ENCODE measurements at regions of chr12 and their contacts with region 1.

Region 1: GRCh38 chr12:112125250-112125999 is at the start of gene TRAFD1:
- DNase-seq: peak; percentile 97 to 99
- ATAC-seq: peak; percentile 99 to 100
- H3K4me3 ChIP-seq: peak within 1 kb of the TSS; percentile 78
- H3K27ac ChIP-seq: peak within 1 kb of the TSS; percentile 75 to 86
- H3K4me1 ChIP-seq: peaks cover 60% of the 10 kb centered on the region
- CTCF ChIP-seq: no peak
- EP300 ChIP-seq: no peak
- POLR2A ChIP-seq: peak; percentile 97
- RAD21 ChIP-seq: no peak
- polyA plus RNA-seq, gene TRAFD1: 23.3 and 33.1 TPM in 2 replicates

Region 2: GRCh38 chr12:112108201-112109079 is 17.0 kb before region 1 on chr12 and contains the start of gene NAA25:
- CTCF ChIA-PET with region 1: interaction called, 21 read pairs
- POLR2A ChIA-PET with region 1: interaction called, 16 read pairs
- DNase-seq: peak; percentile 84 to 93
- ATAC-seq: peak; percentile 81 to 85
- H3K4me3 ChIP-seq: peak within 1 kb of the TSS; percentile 91
- H3K27ac ChIP-seq: peak within 1 kb of the TSS; percentile 89 to 98
- H3K4me1 ChIP-seq: peaks cover 65% of the 10 kb centered on the region
- CTCF ChIP-seq: no peak
- EP300 ChIP-seq: no peak
- POLR2A ChIP-seq: peak; percentile 70
- RAD21 ChIP-seq: no peak
- polyA plus RNA-seq, gene NAA25: 41.4 and 49.3 TPM in 2 replicates

Region 3: DNA sequence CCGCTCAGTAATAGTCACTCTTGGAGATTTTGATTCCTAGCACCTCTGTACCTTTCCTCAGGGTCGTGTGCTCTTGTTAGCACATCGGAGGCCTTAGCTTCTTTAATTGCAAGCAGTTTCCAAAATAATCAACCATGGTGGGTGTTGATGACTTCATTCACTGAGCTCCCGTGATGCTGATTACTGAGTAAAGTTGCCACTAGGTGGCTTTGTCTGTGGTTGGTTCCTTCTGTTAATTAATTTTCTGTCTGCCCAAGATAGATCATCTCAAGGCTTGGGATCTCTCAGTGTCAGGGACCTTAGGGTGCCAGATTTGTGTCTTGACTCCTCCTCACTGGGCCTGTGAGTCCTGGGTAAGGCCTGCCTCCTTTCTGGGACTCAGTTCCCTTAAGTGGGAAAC is 347.6 kb after region 1 on chr12:
- CTCF ChIA-PET with region 1: no interaction called
- POLR2A ChIA-PET with region 1: no interaction called
- DNase-seq: peak; percentile 17 to 33
- ATAC-seq: peak in 1 of 2 experiments; percentile 61; a peak in 3 of 6 replicates
- H3K4me3 ChIP-seq: no peak overlapping the region
- H3K27ac ChIP-seq: no peak overlapping the region
- H3K4me1 ChIP-seq: no peaks in the 10 kb centered on the region
- CTCF ChIP-seq: peak; percentile 29; the same call in 2 of the 3 replicates
- EP300 ChIP-seq: no peak
- POLR2A ChIP-seq: no peak
- RAD21 ChIP-seq: peak; percentile 13 to 26; a peak in 1 of 5 replicates

Region 4: GRCh38 chr12:112798006-112798760 is 672.8 kb after region 1 on chr12:
- CTCF ChIA-PET with region 1: no interaction called
- POLR2A ChIA-PET with region 1: no interaction called
- DNase-seq: no peak
- ATAC-seq: no peak
- H3K4me3 ChIP-seq: no peak overlapping the region
- H3K27ac ChIP-seq: no peak overlapping the region
- H3K4me1 ChIP-seq: peaks cover 8% of the 10 kb centered on the region
- CTCF ChIP-seq: no peak
- EP300 ChIP-seq: no peak
- POLR2A ChIP-seq: no peak
- RAD21 ChIP-seq: no peak